Activated CD8-positive, alpha-beta T cell treated with anti-CD3 and anti-CD28 coated beads, Interleukin-2, amount 10 ng/mL, durations not matched to agents 7 days and 5 days (primary cell): ENCODE measurements at regions of chr11 and their contacts with region 1.

Region 1: GRCh38 chr11:58629857-58630256 is 7.4 kb downstream of the CNTF start:
- DNase-seq: peak; percentile 27
- ATAC-seq: peak; percentile 55
- H3K4me3 Mint-ChIP-seq: no peak overlapping the region
- H3K27ac Mint-ChIP-seq: no peak overlapping the region
- H3K4me1 Mint-ChIP-seq: no peaks in the 10 kb centered on the region
- H3K27me3 Mint-ChIP-seq: no peaks in the 10 kb centered on the region

Region 2: DNA sequence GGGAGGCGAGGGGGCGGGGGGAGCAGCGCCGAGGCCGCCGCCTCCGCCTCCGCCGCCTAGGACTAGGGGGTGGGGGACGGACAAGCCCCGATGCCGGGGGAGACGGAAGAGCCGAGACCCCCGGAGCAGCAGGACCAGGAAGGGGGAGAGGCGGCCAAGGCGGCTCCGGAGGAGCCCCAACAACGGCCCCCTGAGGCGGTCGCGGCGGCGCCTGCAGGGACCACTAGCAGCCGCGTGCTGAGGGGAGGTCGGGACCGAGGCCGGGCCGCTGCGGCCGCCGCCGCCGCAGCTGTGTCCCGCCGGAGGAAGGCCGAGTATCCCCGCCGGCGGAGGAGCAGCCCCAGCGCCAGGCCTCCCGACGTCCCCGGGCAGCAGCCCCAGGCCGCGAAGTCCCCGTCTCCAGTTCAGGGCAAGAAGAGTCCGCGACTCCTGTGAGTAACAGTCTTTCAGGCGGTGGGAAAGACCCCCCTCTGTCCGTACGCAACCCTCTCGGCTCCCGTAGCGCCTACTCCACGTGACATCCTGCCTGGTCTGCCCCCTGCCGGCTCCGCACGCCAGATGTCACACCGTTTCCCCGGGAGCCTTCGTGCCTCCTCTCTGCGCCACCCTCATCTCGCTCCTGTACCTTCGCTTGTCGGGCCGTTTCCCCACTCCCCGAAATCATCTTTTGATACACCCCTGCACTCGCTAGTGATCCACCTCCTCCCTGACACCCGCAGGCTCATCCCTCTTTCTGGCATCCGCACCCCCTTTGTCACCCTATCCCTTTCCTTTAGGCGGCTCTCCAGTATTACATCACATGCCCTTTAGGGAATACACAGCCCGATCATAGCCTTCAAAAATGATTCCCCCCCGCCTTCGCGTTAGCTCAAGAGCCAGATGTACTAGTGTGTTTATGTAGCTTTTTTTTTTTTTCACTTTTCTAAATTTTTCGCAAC is 50.4 kb before region 1 on chr11:
- CTCF ChIA-PET with region 1: interaction called, 35 read pairs
- POLR2A ChIA-PET with region 1: interaction called, 4 read pairs
- DNase-seq: peak; percentile 94
- ATAC-seq: peak; percentile 53
- H3K4me3 Mint-ChIP-seq: peak overlapping the region; percentile 85
- H3K27ac Mint-ChIP-seq: peak overlapping the region; percentile 100
- H3K4me1 Mint-ChIP-seq: peaks cover 47% of the 10 kb centered on the region
- H3K27me3 Mint-ChIP-seq: no peaks in the 10 kb centered on the region

Region 3: GRCh38 chr11:58586998-58587397 is 42.9 kb before region 1 on chr11:
- CTCF ChIA-PET with region 1: interaction called, 13 read pairs
- POLR2A ChIA-PET with region 1: no interaction called
- DNase-seq: no peak
- ATAC-seq: no peak
- H3K4me3 Mint-ChIP-seq: no peak overlapping the region
- H3K27ac Mint-ChIP-seq: no peak overlapping the region
- H3K4me1 Mint-ChIP-seq: peaks cover 31% of the 10 kb centered on the region
- H3K27me3 Mint-ChIP-seq: no peaks in the 10 kb centered on the region

Region 4: GRCh38 chr11:58597486-58598144 is 32.2 kb before region 1 on chr11:
- CTCF ChIA-PET with region 1: interaction called, 16 read pairs
- POLR2A ChIA-PET with region 1: interaction called, 4 read pairs
- DNase-seq: no peak
- ATAC-seq: no peak
- H3K4me3 Mint-ChIP-seq: no peak overlapping the region
- H3K27ac Mint-ChIP-seq: no peak overlapping the region
- H3K4me1 Mint-ChIP-seq: peaks cover 53% of the 10 kb centered on the region
- H3K27me3 Mint-ChIP-seq: no peaks in the 10 kb centered on the region

Region 5: DNA sequence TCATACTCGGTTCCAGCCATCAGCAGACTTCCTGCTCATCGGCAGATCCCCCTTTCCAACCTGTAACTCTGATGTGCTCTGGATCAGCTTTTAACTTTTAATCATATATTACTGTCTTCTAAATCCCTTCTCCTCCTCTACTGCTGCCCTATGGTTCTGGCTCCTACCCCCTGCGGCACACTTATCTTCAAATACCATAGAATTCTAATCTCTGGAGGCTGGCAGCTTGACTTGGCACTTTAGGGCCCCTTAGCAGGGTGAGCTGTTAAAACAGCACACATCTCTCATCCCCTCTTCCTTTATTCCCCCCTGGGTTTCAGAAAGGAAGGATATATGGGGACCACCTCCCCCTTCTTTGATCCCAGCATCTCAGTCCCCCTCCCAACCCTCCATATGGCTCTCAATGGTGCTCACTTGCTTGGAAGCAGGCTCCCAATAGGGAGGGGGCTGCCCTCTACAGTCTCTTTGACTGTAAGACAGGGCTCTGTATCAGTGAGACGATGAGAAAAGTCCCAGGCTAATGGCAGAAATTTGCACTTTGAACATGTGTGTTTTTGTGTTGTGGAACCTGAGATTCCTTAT is 11.8 kb before region 1 on chr11:
- CTCF ChIA-PET with region 1: interaction called, 19 read pairs
- POLR2A ChIA-PET with region 1: no interaction called
- DNase-seq: no peak
- ATAC-seq: no peak
- H3K4me3 Mint-ChIP-seq: no peak overlapping the region
- H3K27ac Mint-ChIP-seq: peak overlapping the region; percentile 37
- H3K4me1 Mint-ChIP-seq: peaks cover 6% of the 10 kb centered on the region
- H3K27me3 Mint-ChIP-seq: no peaks in the 10 kb centered on the region

Region 6: DNA sequence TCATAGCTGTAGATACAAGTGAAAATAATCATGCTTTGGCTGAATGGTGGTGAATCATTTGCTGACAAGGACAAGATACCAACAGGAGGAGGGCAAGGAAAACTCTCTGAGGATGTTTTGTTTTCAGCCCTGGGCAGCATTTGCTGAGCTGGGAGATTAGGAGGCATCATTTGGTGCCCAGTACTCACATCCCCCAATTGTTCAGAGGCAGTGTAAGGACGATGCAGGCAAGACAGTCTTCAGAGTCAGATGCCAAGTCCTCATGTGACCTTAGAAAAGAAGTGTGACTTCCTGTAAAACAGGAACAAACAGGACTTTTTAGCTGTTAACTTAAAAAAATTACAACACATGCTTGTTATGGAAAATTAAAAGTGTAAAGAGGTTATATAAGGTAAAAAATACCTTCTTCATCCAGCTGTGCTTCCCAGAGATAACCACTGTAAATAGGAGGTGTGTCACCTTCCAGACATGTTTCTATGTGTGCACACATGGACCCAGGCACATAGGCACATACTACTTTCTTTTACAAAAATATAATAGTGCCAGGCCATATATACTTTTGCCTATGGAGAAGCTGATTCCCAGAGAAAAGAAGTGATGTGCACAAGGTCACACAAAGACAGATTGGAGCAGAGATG is 10.6 kb after region 1 on chr11:
- CTCF ChIA-PET with region 1: interaction called, 36 read pairs
- POLR2A ChIA-PET with region 1: no interaction called
- DNase-seq: no peak
- ATAC-seq: peak; percentile 67
- H3K4me3 Mint-ChIP-seq: no peak overlapping the region
- H3K27ac Mint-ChIP-seq: peak overlapping the region; percentile 33
- H3K4me1 Mint-ChIP-seq: peaks cover 13% of the 10 kb centered on the region
- H3K27me3 Mint-ChIP-seq: no peaks in the 10 kb centered on the region

Region 7: GRCh38 chr11:58739725-58740430 is 110.0 kb after region 1 on chr11:
- CTCF ChIA-PET with region 1: no interaction called
- POLR2A ChIA-PET with region 1: no interaction called
- DNase-seq: no peak
- ATAC-seq: no peak
- H3K4me3 Mint-ChIP-seq: no peak overlapping the region
- H3K27ac Mint-ChIP-seq: no peak overlapping the region
- H3K4me1 Mint-ChIP-seq: peaks cover 12% of the 10 kb centered on the region
- H3K27me3 Mint-ChIP-seq: no peaks in the 10 kb centered on the region